ENCODE measurements at regions of chr15 and their contacts with region 1.

Region 1: GRCh38 chr15:94033683-94034020 is 197.7 kb upstream of the MCTP2 start:
- DNase-seq: no peak
- H3K4me3 ChIP-seq: no peak overlapping the region
- H3K27ac ChIP-seq: no peak overlapping the region
- H3K4me1 ChIP-seq: no peaks in the 10 kb centered on the region
- H3K27me3 ChIP-seq: no peaks in the 10 kb centered on the region
- CTCF ChIP-seq: no peak
- EP300 ChIP-seq: no peak
- POLR2A ChIP-seq: no peak

Region 2: GRCh38 chr15:93942269-93942694 is 91.4 kb before region 1 on chr15:
- in situ Hi-C with region 1: no loop called
- intact Hi-C with region 1: no loop called
- DNase-seq: no peak
- H3K4me3 ChIP-seq: no peak overlapping the region
- H3K27ac ChIP-seq: no peak overlapping the region
- H3K4me1 ChIP-seq: no peaks in the 10 kb centered on the region
- H3K27me3 ChIP-seq: no peaks in the 10 kb centered on the region
- CTCF ChIP-seq: no peak
- EP300 ChIP-seq: no peak
- POLR2A ChIP-seq: no peak

Region 3: GRCh38 chr15:93997084-93997918 is 36.4 kb before region 1 on chr15:
- in situ Hi-C with region 1: no loop called
- intact Hi-C with region 1: loop called (anchors 1 kb)
- DNase-seq: no peak
- H3K4me3 ChIP-seq: no peak overlapping the region
- H3K27ac ChIP-seq: no peak overlapping the region
- H3K4me1 ChIP-seq: no peaks in the 10 kb centered on the region
- H3K27me3 ChIP-seq: no peaks in the 10 kb centered on the region
- CTCF ChIP-seq: peak; percentile 51 to 73 (median 62)
- EP300 ChIP-seq: no peak
- POLR2A ChIP-seq: no peak

Measured in transverse colon (tissue), 4 donors.